CD4-positive, alpha-beta memory T cell (primary cell): ENCODE measurements at regions of chr14 and their contacts with region 1.

Region 1: GRCh38 chr14:88030079-88030478 is 25.1 kb downstream of the GPR65 start:
- DNase-seq: peak in 1 of 5 donors; percentile 18
- H3K4me3 ChIP-seq: no peak overlapping the region
- H3K4me3 Mint-ChIP-seq: peak overlapping the region in 5 of 8 donors; percentile 12 to 63 (median 43)
- H3K27ac ChIP-seq: no peak overlapping the region
- H3K27ac Mint-ChIP-seq: peak overlapping the region in 5 of 7 donors; percentile 11 to 81 (median 71)
- H3K4me1 ChIP-seq: peaks cover 51% of the 10 kb centered on the region
- H3K4me1 Mint-ChIP-seq: peaks cover 42 to 62% (median 52%) of the 10 kb centered on the region in 4 donors
- H3K27me3 ChIP-seq: no peaks in the 10 kb centered on the region
- H3K27me3 Mint-ChIP-seq: no peaks in the 10 kb centered on the region

Region 2: GRCh38 chr14:88013750-88014349 is 16.2 kb before region 1 on chr14:
- CTCF ChIA-PET with region 1: interaction called, 13 read pairs
- POLR2A ChIA-PET with region 1: interaction called, 8 read pairs
- intact Hi-C with region 1: no loop called
- DNase-seq: peak in 4 of 5 donors; percentile 29 to 46 (median 38)
- H3K4me3 ChIP-seq: no peak overlapping the region
- H3K4me3 Mint-ChIP-seq: peak overlapping the region in 6 of 8 donors; percentile 3 to 69 (median 44)
- H3K27ac ChIP-seq: no peak overlapping the region
- H3K27ac Mint-ChIP-seq: peak overlapping the region; percentile 9 to 91 (median 65)
- H3K4me1 ChIP-seq: peaks cover 59% of the 10 kb centered on the region
- H3K4me1 Mint-ChIP-seq: peaks cover 49 to 77% (median 64%) of the 10 kb centered on the region in 4 donors
- H3K27me3 ChIP-seq: no peaks in the 10 kb centered on the region
- H3K27me3 Mint-ChIP-seq: no peaks in the 10 kb centered on the region

Region 3: GRCh38 chr14:88385345-88386101 is 355.4 kb after region 1 on chr14 and contains the start of gene SPATA7:
- CTCF ChIA-PET with region 1: no interaction called
- POLR2A ChIA-PET with region 1: no interaction called
- intact Hi-C with region 1: no loop called
- DNase-seq: peak; percentile 70 to 74 (median 71)
- H3K4me3 ChIP-seq: peak within 1 kb of the TSS; percentile 97 to 98
- H3K4me3 Mint-ChIP-seq: peak within 1 kb of the TSS; percentile 95 to 97 (median 96)
- H3K27ac ChIP-seq: peak within 1 kb of the TSS; percentile 72
- H3K27ac Mint-ChIP-seq: peak within 1 kb of the TSS; percentile 75 to 96 (median 93)
- H3K4me1 ChIP-seq: peaks cover 15% of the 10 kb centered on the region
- H3K4me1 Mint-ChIP-seq: peaks cover 10 to 23% (median 16%) of the 10 kb centered on the region in 4 donors
- H3K27me3 ChIP-seq: no peaks in the 10 kb centered on the region
- H3K27me3 Mint-ChIP-seq: no peaks in the 10 kb centered on the region
- total RNA-seq, gene SPATA7: 3.4 to 3.7 TPM